ENCODE measurements at regions of chr9 and their contacts with region 1.

Region 1: GRCh38 chr9:114653556-114654159 is 3.9 kb downstream of the TEX53 start:
- DNase-seq: peak; percentile 56 to 93
- H3K4me3 ChIP-seq: no peak overlapping the region
- H3K27ac ChIP-seq: no peak overlapping the region
- H3K4me1 ChIP-seq: peaks cover 0 to 3% (median 2%) of the 10 kb centered on the region in 4 experiments; a peak in 2 of 7 replicates
- H3K27me3 ChIP-seq: no peaks in the 10 kb centered on the region; a peak in 1 of 7 replicates
- CTCF ChIP-seq: peak; percentile 41 to 93 (median 89)
- EP300 ChIP-seq: no peak
- POLR2A ChIP-seq: no peak
- RAD21 ChIP-seq: peak; percentile 95 to 97

Region 2: GRCh38 chr9:114413861-114414301 is 239.8 kb before region 1 on chr9:
- CTCF ChIA-PET with region 1: interaction called, 116 read pairs
- POLR2A ChIA-PET with region 1: interaction called, 3 read pairs
- DNase-seq: no peak
- H3K4me3 ChIP-seq: no peak overlapping the region
- H3K27ac ChIP-seq: no peak overlapping the region
- H3K4me1 ChIP-seq: peaks cover 5 to 12% (median 7%) of the 10 kb centered on the region in 4 experiments
- H3K27me3 ChIP-seq: no peaks in the 10 kb centered on the region
- CTCF ChIP-seq: no peak
- EP300 ChIP-seq: no peak
- POLR2A ChIP-seq: no peak
- RAD21 ChIP-seq: no peak

Region 3: GRCh38 chr9:114450833-114451706 is 202.6 kb before region 1 on chr9:
- CTCF ChIA-PET with region 1: interaction called, 11 read pairs
- POLR2A ChIA-PET with region 1: no interaction called
- DNase-seq: no peak
- H3K4me3 ChIP-seq: no peak overlapping the region
- H3K27ac ChIP-seq: no peak overlapping the region
- H3K4me1 ChIP-seq: peaks cover 1 to 6% (median 4%) of the 10 kb centered on the region in 4 experiments; a peak in 3 of 7 replicates
- H3K27me3 ChIP-seq: no peaks in the 10 kb centered on the region
- CTCF ChIP-seq: no peak
- EP300 ChIP-seq: no peak
- POLR2A ChIP-seq: no peak
- RAD21 ChIP-seq: no peak

Region 4: DNA sequence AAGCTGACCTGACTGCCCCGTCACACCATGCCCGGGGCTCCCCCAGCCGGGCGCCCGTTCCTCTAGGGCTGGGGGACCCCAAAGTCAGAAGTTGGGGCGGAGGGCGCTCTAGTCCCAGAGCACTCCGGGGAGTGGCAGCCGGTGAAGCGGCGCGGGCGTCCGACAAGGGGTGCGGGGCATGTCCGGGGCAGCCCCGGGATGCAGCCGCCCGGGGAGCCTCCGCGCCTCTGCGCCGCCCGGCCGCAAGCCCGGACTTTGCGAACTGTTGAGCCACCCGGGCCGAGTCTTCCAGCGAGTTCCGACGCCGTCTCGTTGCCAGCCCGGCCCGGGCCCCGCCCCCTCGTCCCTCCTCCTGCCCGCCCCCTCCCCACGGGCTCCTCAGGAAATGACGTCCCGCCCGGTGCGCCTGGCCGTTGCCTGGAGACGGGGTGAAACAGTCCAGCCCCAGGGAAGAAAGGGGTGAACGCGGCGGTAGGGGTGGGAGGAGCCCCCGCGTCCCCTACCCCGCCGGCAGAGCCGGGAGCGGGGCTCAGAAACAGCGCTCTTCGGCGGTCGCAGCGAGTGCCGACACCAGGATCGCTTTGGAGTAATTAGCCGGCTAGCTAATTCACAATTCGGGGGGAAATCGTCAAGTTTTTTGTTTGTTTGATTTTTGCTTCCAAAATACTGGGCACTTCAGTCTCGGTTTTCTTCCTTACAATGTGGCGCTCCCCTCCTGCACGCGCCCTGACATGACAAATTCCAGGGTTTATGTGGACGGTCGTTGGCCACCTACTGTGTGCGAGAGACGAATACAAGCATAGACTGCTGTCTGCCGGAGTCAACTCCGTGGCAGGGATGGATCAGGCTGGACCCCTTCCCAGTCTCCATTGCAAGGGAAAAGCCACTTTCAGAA is 148.2 kb before region 1 on chr9 and contains the start of gene WHRN:
- CTCF ChIA-PET with region 1: interaction called, 27 read pairs
- POLR2A ChIA-PET with region 1: interaction called, 3 read pairs
- DNase-seq: peak; percentile 77 to 94
- H3K4me3 ChIP-seq: peak within 1 kb of the TSS; percentile 62 to 68 (median 66)
- H3K27ac ChIP-seq: no peak within 1 kb of the TSS
- H3K4me1 ChIP-seq: peaks cover 10 to 22% (median 16%) of the 10 kb centered on the region in 4 experiments
- H3K27me3 ChIP-seq: peaks cover 2 to 14% (median 8%) of the 10 kb centered on the region in 4 experiments; a peak in 6 of 7 replicates
- CTCF ChIP-seq: peak in 2 of 3 experiments; percentile 0 to 3; a peak in 2 of 4 replicates
- EP300 ChIP-seq: no peak
- POLR2A ChIP-seq: peak; percentile 45 to 64
- RAD21 ChIP-seq: peak; percentile 1 to 9; a peak in 1 of 4 replicates
- total RNA-seq, gene WHRN: 7.4 and 7.7 TPM in 2 replicates

Region 5: GRCh38 chr9:114559830-114560513 is 93.7 kb before region 1 on chr9:
- CTCF ChIA-PET with region 1: interaction called, 11 read pairs
- POLR2A ChIA-PET with region 1: no interaction called
- DNase-seq: no peak
- H3K4me3 ChIP-seq: no peak overlapping the region
- H3K27ac ChIP-seq: no peak overlapping the region
- H3K4me1 ChIP-seq: no peaks in the 10 kb centered on the region
- H3K27me3 ChIP-seq: no peaks in the 10 kb centered on the region
- CTCF ChIP-seq: no peak
- EP300 ChIP-seq: no peak
- POLR2A ChIP-seq: no peak
- RAD21 ChIP-seq: no peak

Region 6: GRCh38 chr9:114574438-114574837 is 79.2 kb before region 1 on chr9:
- CTCF ChIA-PET with region 1: no interaction called
- POLR2A ChIA-PET with region 1: no interaction called
- DNase-seq: no peak
- H3K4me3 ChIP-seq: no peak overlapping the region
- H3K27ac ChIP-seq: no peak overlapping the region
- H3K4me1 ChIP-seq: no peaks in the 10 kb centered on the region
- H3K27me3 ChIP-seq: no peaks in the 10 kb centered on the region
- CTCF ChIP-seq: no peak
- EP300 ChIP-seq: no peak
- POLR2A ChIP-seq: no peak
- RAD21 ChIP-seq: no peak

Region 7: GRCh38 chr9:114611516-114612271 is 42.0 kb before region 1 on chr9:
- CTCF ChIA-PET with region 1: interaction called, 14 read pairs
- POLR2A ChIA-PET with region 1: interaction called, 3 read pairs
- DNase-seq: peak in 1 of 2 experiments; percentile 70
- H3K4me3 ChIP-seq: peak overlapping the region; percentile 37 to 78 (median 40)
- H3K27ac ChIP-seq: peak overlapping the region; percentile 33; the same call in 1 of the 2 replicates
- H3K4me1 ChIP-seq: peaks cover 11 to 21% (median 15%) of the 10 kb centered on the region in 4 experiments
- H3K27me3 ChIP-seq: peaks cover 0 to 13% (median 7%) of the 10 kb centered on the region in 4 experiments; a peak in 5 of 7 replicates
- CTCF ChIP-seq: no peak
- EP300 ChIP-seq: no peak
- POLR2A ChIP-seq: peak in 1 of 2 experiments; percentile 29; a peak in 1 of 3 replicates
- RAD21 ChIP-seq: no peak

Region 8: DNA sequence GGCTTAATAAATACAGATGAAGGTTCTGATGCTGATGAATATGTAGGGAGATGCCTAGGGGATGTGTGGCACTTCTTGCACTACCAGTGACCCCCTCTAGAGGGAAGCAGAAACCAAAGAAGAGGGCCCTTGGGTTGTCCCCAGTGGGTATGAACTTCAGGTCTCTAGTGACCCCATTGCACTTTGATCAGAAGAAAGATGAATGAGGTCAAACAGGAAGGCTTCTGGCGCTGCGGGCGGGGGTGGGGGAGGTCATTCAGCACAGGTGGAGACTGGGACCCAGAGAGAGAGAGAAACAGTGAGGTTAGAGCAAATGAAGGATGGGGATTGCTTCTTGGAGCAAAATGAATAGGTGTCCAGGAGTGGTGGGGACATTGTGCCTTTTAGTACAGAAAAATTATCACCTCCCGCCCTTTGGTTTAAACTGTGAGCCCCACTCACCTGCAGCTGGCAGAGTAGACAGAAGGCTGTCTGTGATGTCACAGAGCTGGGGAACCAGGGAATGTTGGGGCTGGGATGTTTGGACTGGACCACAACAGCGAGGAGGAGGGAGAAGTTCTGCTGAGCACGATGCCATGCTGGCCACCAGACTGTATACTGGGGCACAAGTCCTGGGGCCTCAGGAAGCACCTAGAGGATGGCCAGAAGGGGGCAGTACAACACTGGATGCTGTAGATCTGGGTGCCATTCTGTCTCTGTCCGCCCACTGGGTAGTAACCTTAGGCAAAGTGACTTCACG is 28.1 kb after region 1 on chr9 and contains the start of gene TEX48:
- CTCF ChIA-PET with region 1: interaction called, 35 read pairs
- POLR2A ChIA-PET with region 1: no interaction called
- DNase-seq: peak; percentile 43 to 84
- H3K4me3 ChIP-seq: no peak within 1 kb of the TSS
- H3K27ac ChIP-seq: no peak within 1 kb of the TSS
- H3K4me1 ChIP-seq: no peaks in the 10 kb centered on the region
- H3K27me3 ChIP-seq: no peaks in the 10 kb centered on the region; a peak in 2 of 7 replicates
- CTCF ChIP-seq: peak; percentile 86 to 91 (median 90)
- EP300 ChIP-seq: no peak
- POLR2A ChIP-seq: no peak
- RAD21 ChIP-seq: peak; percentile 85 to 94
- total RNA-seq, gene TEX48: not detected in 2 replicates